ENCODE measurements at regions of chr20 and their contacts with region 1.

Region 1: DNA sequence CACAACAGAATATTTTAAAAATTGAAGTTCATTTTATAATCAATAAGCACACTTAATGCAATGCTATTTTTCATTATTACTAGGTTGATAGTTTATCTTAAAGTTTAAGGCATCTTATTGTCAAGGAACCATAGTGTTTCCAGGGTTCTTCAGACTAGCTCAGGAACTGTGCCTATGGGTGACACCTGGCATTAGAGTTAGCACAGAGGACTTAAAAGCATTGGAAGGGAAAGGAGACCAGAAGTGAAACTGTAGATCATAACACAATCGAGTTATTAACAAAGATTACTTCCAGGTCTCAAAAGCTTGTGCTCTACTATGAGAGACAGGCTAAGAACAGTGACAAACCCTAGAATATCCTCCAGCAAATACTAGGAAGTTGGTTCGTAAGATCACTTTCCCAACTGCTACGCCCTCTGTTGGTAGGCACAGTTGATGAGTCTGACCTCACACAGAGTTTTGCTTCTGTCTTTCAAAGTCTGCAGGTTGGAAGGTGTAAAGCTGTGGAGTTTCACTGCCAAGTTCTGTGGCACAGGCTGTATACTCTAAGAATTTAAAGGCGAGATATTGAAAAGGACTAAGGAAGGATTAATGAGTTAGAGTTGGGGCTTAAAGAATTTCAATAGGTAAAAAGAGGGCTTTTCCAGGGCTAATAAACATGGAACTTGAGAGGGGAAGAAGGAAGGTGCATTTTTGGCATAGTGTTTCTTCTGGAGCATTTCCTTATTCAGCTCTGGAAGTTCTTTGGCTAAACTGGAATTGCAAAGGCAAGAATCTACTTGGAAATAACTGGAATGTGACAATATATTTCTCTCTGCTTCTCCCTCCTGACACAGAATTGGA is 531.3 kb upstream of the JAG1 start:
- H3K4me3 ChIP-seq: no peak overlapping the region
- H3K27ac ChIP-seq: no peak overlapping the region
- H3K4me1 ChIP-seq: peaks cover 4% of the 10 kb centered on the region; the same call in 1 of the 2 replicates
- CTCF ChIP-seq: no peak

Region 2: GRCh38 chr20:10761232-10761631 is 443.9 kb before region 1 on chr20:
- CTCF ChIA-PET with region 1: no interaction called
- POLR2A ChIA-PET with region 1: no interaction called
- H3K4me3 ChIP-seq: no peak overlapping the region
- H3K27ac ChIP-seq: no peak overlapping the region
- H3K4me1 ChIP-seq: peaks cover 5% of the 10 kb centered on the region; the same call in 1 of the 2 replicates
- CTCF ChIP-seq: no peak

Region 3: DNA sequence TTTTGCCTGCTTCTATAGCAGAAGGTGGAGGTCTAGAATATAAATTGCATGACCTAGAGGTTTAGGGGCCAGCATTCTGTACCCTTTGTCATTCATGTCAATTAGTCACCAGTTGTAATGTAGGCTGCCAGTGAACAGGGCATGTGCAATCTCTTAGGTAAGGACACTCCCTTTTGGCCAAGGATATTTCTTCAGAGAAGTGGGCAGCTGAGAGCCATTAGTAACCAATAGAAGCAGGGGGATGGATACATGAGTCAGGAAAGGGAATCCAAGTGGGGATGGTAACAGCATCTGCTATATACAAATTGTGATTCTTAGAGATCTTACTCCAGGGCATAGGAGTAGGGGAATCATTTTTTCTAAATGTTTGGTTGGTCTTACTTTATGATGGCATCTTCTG is 37.1 kb before region 1 on chr20:
- CTCF ChIA-PET with region 1: no interaction called
- POLR2A ChIA-PET with region 1: no interaction called
- H3K4me3 ChIP-seq: no peak overlapping the region
- H3K27ac ChIP-seq: no peak overlapping the region
- H3K4me1 ChIP-seq: no peaks in the 10 kb centered on the region
- CTCF ChIP-seq: no peak

Region 4: DNA sequence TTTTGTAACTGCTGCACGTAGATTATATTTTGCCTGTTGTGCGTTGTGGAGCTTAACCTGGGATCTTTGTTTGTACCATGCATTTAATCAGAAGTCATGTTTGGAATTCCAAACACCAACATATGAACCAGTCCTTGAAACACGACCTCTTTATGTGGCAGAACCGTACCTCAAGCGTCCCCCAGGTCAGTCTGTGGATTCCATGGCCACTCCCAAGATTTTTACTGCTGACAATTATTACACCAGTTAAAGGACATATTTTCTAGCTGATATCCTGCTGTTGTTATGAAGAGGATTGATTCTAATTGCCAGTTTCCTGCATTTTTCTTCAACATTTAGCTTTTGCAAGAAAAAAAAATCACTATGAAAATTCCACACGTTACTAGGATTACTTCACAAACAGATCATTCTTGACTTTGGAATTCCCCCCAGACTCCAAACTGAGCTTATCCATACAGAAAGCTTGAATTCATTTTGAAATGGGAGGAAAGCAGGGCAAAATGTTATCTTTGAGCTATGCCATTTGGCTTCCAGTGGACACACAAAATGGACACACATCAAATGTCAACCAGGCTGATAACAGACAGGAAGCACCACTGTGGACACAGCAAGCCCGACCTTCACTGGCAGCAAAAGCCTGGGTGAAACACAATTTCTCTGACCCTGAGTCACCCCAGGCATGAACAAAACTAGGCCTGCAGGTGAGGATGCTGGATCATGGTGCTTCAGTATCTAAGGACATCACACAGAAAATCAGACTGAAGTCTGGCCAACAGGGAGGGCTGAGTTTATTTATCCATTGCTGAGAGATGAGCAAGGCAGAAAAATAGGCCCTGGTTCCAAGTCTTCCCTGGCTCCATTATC is 11.5 kb after region 1 on chr20:
- CTCF ChIA-PET with region 1: interaction called, 28 read pairs
- POLR2A ChIA-PET with region 1: no interaction called
- H3K4me3 ChIP-seq: no peak overlapping the region
- H3K27ac ChIP-seq: no peak overlapping the region
- H3K4me1 ChIP-seq: peaks cover 7% of the 10 kb centered on the region
- CTCF ChIP-seq: no peak

Region 5: DNA sequence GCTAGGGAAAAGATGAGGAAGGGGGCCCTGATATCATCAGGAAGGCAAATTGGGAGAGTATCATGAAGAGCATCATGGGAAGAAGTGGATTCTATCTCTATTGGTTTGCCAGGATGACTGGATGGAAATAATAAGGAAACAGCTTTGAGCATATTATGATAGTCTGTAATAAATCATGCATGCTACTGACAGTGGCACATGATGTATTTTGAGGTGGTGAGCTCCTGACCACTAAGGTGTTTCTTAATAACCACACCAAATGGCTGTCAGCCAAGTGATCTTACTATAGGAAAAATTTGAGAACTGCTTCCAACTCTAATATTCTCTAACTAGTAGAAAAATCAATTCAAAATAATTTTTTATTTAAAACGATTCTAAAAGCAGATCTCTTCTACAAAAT is 17.1 kb after region 1 on chr20:
- CTCF ChIA-PET with region 1: interaction called, 14 read pairs
- POLR2A ChIA-PET with region 1: no interaction called
- H3K4me3 ChIP-seq: no peak overlapping the region
- H3K27ac ChIP-seq: no peak overlapping the region
- H3K4me1 ChIP-seq: peaks cover 3% of the 10 kb centered on the region
- CTCF ChIP-seq: no peak

Region 6: DNA sequence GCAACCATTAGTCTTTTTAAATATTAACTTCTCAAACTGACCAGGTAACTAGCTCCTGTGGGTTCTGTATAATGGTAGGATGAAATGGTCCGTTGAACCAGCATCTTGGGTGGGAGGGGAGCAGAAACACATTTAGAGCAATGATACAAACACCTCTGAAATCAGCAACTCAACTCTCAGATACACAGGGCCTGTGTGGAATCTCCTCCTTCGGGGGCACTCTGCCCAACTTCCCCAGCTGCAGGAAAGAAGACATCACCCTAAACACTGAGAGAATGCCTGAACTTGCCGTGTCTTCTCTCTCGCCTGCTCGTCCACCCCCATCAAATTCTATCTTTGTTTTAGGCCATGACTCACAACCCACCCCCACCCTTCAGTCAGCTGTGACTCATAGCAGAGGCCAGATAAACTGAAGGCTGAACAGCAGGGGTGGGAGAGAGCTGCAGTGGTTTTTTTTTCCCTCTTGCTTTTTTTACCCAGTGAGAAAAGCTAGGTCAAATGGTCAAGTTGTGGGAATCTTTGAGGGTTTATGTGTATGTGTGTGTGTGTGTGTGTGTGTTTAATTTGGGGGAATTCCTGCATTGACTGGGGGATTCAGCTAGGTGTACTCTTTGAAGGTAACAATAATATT is 62.1 kb after region 1 on chr20:
- CTCF ChIA-PET with region 1: interaction called, 14 read pairs
- POLR2A ChIA-PET with region 1: no interaction called
- H3K4me3 ChIP-seq: no peak overlapping the region
- H3K27ac ChIP-seq: peak overlapping the region; percentile 54; the same call in 1 of the 2 replicates
- H3K4me1 ChIP-seq: peaks cover 8% of the 10 kb centered on the region; the same call in 1 of the 2 replicates
- CTCF ChIP-seq: no peak